ENCODE measurements at regions of chr17 and their contacts with region 1.

Region 1: DNA sequence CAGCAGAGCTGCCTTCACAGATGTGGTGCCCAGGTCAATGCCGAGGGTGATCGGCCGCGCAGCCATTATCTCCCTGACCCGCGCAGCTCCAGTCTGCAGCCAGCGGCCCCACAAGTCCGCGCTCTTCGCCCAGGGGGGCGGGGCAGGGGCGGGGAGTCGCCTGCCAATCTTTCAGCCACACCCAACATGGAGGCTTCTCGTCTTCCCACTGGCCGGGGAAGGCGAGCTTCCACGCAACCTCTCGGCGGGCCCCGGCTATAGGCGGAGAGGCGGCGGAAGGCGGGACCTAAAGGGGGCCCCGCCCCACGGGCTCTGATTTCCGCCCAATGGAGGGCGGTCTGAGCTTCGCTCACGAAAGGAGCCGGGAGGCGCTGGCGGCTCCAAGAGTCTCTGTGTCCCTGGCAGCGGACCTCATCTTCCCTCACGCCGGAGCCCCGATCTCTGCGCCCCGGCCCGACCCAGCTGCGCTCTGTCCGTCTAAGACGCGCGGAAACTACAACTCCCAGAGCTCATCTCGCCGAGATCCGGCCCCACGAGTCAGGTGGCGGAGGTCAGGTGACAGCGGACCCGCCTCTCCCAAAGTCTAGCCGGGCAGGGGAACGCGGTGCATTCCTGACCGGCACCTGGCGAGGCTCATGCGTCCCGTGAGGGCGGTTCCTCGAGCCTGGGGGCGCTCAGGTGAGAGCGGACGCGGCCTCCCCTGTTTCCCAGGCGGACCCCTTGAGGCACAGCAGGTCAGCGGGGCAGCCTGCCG is at the starts of genes CTNS and SHPK:
- DNase-seq: peak; percentile 90 to 96 (median 93)
- ATAC-seq: peak; percentile 96 to 98
- H3K4me3 Mint-ChIP-seq: peak within 1 kb of the TSS; percentile 94 to 100 (median 98)
- H3K27ac Mint-ChIP-seq: peak within 1 kb of the TSS; percentile 96 to 100 (median 99)
- H3K4me1 Mint-ChIP-seq: peaks cover 14 to 41% (median 29%) of the 10 kb centered on the region in 4 donors
- H3K27me3 Mint-ChIP-seq: no peaks in the 10 kb centered on the region
- polyA plus RNA-seq, gene CTNS: 4.5 to 9.5 (median 8.7) TPM
- polyA plus RNA-seq, gene SHPK: 3.5 to 7.1 (median 4.7) TPM

Region 2: DNA sequence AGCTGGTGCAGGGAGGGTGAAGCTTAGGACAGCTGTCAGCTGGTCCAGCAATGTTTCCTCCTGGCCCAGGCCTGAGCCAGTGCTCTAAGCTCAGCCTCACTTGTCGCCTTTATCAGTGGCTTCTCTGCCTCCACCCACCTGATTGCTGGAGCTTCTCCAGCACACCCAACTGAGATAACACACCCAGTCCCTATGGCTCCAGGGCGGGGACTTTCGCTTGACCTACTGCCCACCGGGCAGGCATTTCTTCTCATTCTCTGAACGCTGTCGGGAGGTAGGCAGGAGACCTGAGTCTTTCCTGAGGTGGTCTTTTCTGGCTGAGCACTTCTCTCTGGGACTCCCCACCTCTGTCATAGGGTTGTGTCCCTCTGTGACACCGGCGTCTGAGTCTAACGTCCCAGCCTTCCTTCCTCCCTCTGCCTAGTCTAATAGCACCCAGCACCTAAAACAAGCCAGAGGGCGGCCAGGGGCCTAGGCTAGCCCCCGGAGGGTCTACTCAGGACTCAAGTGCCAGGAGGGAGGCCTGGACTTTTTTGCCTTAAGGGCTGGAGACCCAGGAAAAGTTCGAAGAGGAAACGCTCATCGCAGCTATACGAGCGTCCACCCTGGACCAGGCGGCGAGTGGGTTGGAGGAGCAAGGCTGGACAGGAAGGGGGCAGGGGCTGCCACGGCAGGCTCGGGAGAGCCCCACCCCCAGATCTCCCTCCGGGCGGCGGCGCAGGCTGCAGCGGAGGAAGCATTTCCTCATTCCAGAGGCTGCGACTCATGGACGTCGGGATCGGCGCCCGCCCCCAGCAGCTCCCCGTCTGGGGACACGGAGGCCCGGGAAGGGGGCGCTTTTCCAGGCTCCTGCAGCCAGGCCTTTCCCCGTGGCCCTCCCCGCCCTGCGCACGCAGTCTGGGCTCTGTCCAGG is 31.3 kb after region 1 on chr17:
- POLR2A ChIA-PET with region 1: interaction called, 13 read pairs
- DNase-seq: no peak
- ATAC-seq: no peak
- H3K4me3 Mint-ChIP-seq: peak overlapping the region; percentile 79 to 94 (median 90)
- H3K27ac Mint-ChIP-seq: peak overlapping the region in 6 of 10 donors; percentile 29 to 82 (median 51)
- H3K4me1 Mint-ChIP-seq: peaks cover 14 to 31% (median 28%) of the 10 kb centered on the region in 4 donors
- H3K27me3 Mint-ChIP-seq: no peaks in the 10 kb centered on the region

Measured in naive thymus-derived CD8-positive, alpha-beta T cell (primary cell).